ENCODE measurements at regions of chr17 and their contacts with region 1.

Region 1: GRCh38 chr17:28710861-28711722 is 596 bp downstream of the PROCA1 start:
- DNase-seq: peak; percentile 95 to 98
- H3K4me3 ChIP-seq: peak overlapping the region; percentile 64
- H3K4me3 Mint-ChIP-seq: peak overlapping the region; percentile 82
- H3K27ac Mint-ChIP-seq: peak overlapping the region; percentile 87
- H3K4me1 ChIP-seq: peaks cover 11% of the 10 kb centered on the region
- H3K4me1 Mint-ChIP-seq: peaks cover 6% of the 10 kb centered on the region
- H3K27me3 ChIP-seq: no peaks in the 10 kb centered on the region
- H3K27me3 Mint-ChIP-seq: no peaks in the 10 kb centered on the region
- CTCF ChIP-seq: no peak

Region 2: GRCh38 chr17:28655160-28655840 is 55.8 kb before region 1 on chr17:
- CTCF ChIA-PET with region 1: no interaction called
- POLR2A ChIA-PET with region 1: no interaction called
- intact Hi-C with region 1: no loop called
- DNase-seq: peak in 1 of 2 experiments; percentile 24
- H3K4me3 ChIP-seq: no peak overlapping the region
- H3K4me3 Mint-ChIP-seq: no peak overlapping the region
- H3K27ac Mint-ChIP-seq: no peak overlapping the region
- H3K4me1 ChIP-seq: no peaks in the 10 kb centered on the region; the same call in 1 of the 2 replicates
- H3K4me1 Mint-ChIP-seq: no peaks in the 10 kb centered on the region
- H3K27me3 ChIP-seq: no peaks in the 10 kb centered on the region
- H3K27me3 Mint-ChIP-seq: no peaks in the 10 kb centered on the region
- CTCF ChIP-seq: no peak

Region 3: GRCh38 chr17:28743225-28744103 is 32.4 kb after region 1 on chr17 and contains the start of gene TRAF4:
- CTCF ChIA-PET with region 1: interaction called, 22 read pairs
- POLR2A ChIA-PET with region 1: interaction called, 3 read pairs
- intact Hi-C with region 1: no loop called
- DNase-seq: peak; percentile 83 to 91
- H3K4me3 ChIP-seq: peak within 1 kb of the TSS; percentile 68
- H3K4me3 Mint-ChIP-seq: peak within 1 kb of the TSS; percentile 95
- H3K27ac Mint-ChIP-seq: peak within 1 kb of the TSS; percentile 96
- H3K4me1 ChIP-seq: peaks cover 40% of the 10 kb centered on the region
- H3K4me1 Mint-ChIP-seq: peaks cover 12% of the 10 kb centered on the region
- H3K27me3 ChIP-seq: no peaks in the 10 kb centered on the region
- H3K27me3 Mint-ChIP-seq: no peaks in the 10 kb centered on the region
- CTCF ChIP-seq: peak in 1 of 2 experiments; percentile 18
- total RNA-seq, gene TRAF4: 140 and 154 TPM in 2 replicates

Region 4: GRCh38 chr17:28750178-28751047 is 39.3 kb after region 1 on chr17:
- CTCF ChIA-PET with region 1: interaction called, 22 read pairs
- POLR2A ChIA-PET with region 1: interaction called, 3 read pairs
- intact Hi-C with region 1: no loop called
- DNase-seq: peak; percentile 95 to 96
- H3K4me3 ChIP-seq: no peak overlapping the region
- H3K4me3 Mint-ChIP-seq: no peak overlapping the region
- H3K27ac Mint-ChIP-seq: no peak overlapping the region
- H3K4me1 ChIP-seq: peaks cover 28% of the 10 kb centered on the region
- H3K4me1 Mint-ChIP-seq: peaks cover 12% of the 10 kb centered on the region
- H3K27me3 ChIP-seq: no peaks in the 10 kb centered on the region
- H3K27me3 Mint-ChIP-seq: no peaks in the 10 kb centered on the region
- CTCF ChIP-seq: peak; percentile 99 to 100

Region 5: GRCh38 chr17:28796062-28796461 is 85.0 kb after region 1 on chr17:
- CTCF ChIA-PET with region 1: no interaction called
- POLR2A ChIA-PET with region 1: no interaction called
- intact Hi-C with region 1: no loop called
- DNase-seq: no peak
- H3K4me3 ChIP-seq: no peak overlapping the region
- H3K4me3 Mint-ChIP-seq: no peak overlapping the region
- H3K27ac Mint-ChIP-seq: no peak overlapping the region
- H3K4me1 ChIP-seq: no peaks in the 10 kb centered on the region
- H3K4me1 Mint-ChIP-seq: no peaks in the 10 kb centered on the region
- H3K27me3 ChIP-seq: no peaks in the 10 kb centered on the region
- H3K27me3 Mint-ChIP-seq: no peaks in the 10 kb centered on the region
- CTCF ChIP-seq: no peak